ENCODE measurements at regions of chr18 and their contacts with region 1.

Region 1: GRCh38 chr18:22169007-22169864 is at the start of gene GATA6:
- DNase-seq: peak in 1 of 2 donors; percentile 31
- ATAC-seq: peak; percentile 48 to 50
- H3K4me3 ChIP-seq: peak within 1 kb of the TSS; percentile 66 to 91 (median 70)
- H3K27ac ChIP-seq: peak within 1 kb of the TSS; percentile 43 to 72 (median 65)
- H3K4me1 ChIP-seq: peaks cover 5 to 23% of the 10 kb centered on the region in 2 donors
- H3K27me3 ChIP-seq: peaks cover 88 to 94% (median 93%) of the 10 kb centered on the region in 3 donors
- CTCF ChIP-seq: peak in 2 of 5 experiments; percentile 8 to 27
- POLR2A ChIP-seq: peak; percentile 16 to 43
- total RNA-seq, gene GATA6: 0.34 to 1.2 (median 0.86) TPM

Region 2: GRCh38 chr18:22052405-22053105 is 116.7 kb before region 1 on chr18:
- in situ Hi-C with region 1: loop called in 1 of 4 experiments (anchors 25 kb)
- intact Hi-C with region 1: no loop called
- DNase-seq: no peak
- ATAC-seq: no peak
- H3K4me3 ChIP-seq: no peak overlapping the region
- H3K27ac ChIP-seq: no peak overlapping the region
- H3K4me1 ChIP-seq: no peaks in the 10 kb centered on the region
- H3K27me3 ChIP-seq: no peaks in the 10 kb centered on the region
- CTCF ChIP-seq: no peak
- POLR2A ChIP-seq: no peak

Region 3: GRCh38 chr18:22250591-22250996 is 81.4 kb after region 1 on chr18:
- in situ Hi-C with region 1: loop called in 1 of 4 experiments (anchors 25 kb)
- intact Hi-C with region 1: no loop called
- DNase-seq: no peak
- ATAC-seq: no peak
- H3K4me3 ChIP-seq: no peak overlapping the region
- H3K27ac ChIP-seq: no peak overlapping the region
- H3K4me1 ChIP-seq: peaks cover 0 to 6% of the 10 kb centered on the region in 2 donors
- H3K27me3 ChIP-seq: peaks cover 0 to 2% (median 0%) of the 10 kb centered on the region in 3 donors
- CTCF ChIP-seq: no peak
- POLR2A ChIP-seq: no peak

Region 4: GRCh38 chr18:22363867-22364463 is 194.7 kb after region 1 on chr18:
- in situ Hi-C with region 1: loop called in 2 of 4 experiments (anchors 25 kb)
- intact Hi-C with region 1: no loop called
- DNase-seq: no peak
- ATAC-seq: no peak
- H3K4me3 ChIP-seq: no peak overlapping the region
- H3K27ac ChIP-seq: no peak overlapping the region
- H3K4me1 ChIP-seq: no peaks in the 10 kb centered on the region
- H3K27me3 ChIP-seq: no peaks in the 10 kb centered on the region
- CTCF ChIP-seq: no peak
- POLR2A ChIP-seq: no peak